Activated CD4-positive, alpha-beta T cell treated with anti-CD3 and anti-CD28 coated beads for 36 hours (primary cell): ENCODE measurements at regions of chr16 and their contacts with region 1.

Region 1: GRCh38 chr16:23795378-23795777 is 40.4 kb upstream of the PRKCB start:
- DNase-seq: no peak
- ATAC-seq: no peak
- H3K4me3 Mint-ChIP-seq: no peak overlapping the region
- H3K27ac Mint-ChIP-seq: no peak overlapping the region
- H3K4me1 Mint-ChIP-seq: no peaks in the 10 kb centered on the region
- H3K27me3 Mint-ChIP-seq: peaks cover under 1% of the 10 kb centered on the region

Region 2: DNA sequence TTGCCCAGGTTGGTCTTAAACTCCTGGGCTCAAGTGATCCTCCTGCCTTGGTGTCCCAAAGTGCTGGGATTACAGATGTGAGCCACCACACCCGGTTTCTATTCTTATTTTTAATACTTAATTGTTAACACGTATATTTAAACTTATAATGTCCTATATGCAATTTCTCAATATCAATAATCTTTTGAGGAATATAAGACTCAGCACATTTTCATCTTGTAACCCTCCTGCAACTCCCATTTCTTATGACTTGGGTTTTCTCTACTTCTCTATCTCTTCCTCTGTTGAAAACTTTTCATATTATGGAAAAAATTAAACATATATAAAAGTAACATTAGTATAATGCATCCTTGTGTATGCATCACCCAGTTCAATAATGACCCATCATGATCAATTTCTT is 191.1 kb after region 1 on chr16:
- CTCF ChIA-PET with region 1: no interaction called
- POLR2A ChIA-PET with region 1: no interaction called
- intact Hi-C with region 1: no loop called
- DNase-seq: no peak
- ATAC-seq: no peak
- H3K4me3 Mint-ChIP-seq: no peak overlapping the region
- H3K27ac Mint-ChIP-seq: no peak overlapping the region
- H3K4me1 Mint-ChIP-seq: peaks cover 11% of the 10 kb centered on the region
- H3K27me3 Mint-ChIP-seq: no peaks in the 10 kb centered on the region

Region 3: DNA sequence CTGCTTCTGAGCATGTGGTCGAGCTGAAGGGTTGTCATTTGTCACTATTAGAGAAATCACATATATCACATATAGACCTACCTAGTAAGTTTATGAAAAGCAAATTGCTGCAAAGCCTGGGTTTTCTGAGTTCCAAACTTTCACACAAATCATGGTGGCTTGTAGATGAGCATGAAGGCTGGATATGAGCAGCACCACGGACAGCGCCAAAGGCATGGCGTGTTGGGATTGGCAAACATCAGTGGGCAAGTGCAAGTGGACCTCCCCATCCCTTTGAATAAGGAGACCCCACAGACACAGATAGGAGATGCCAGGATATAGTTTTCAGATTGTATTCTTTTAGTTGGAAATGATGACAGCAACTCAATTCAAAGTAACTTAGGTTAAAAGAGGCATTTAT is 383.1 kb after region 1 on chr16:
- CTCF ChIA-PET with region 1: no interaction called
- POLR2A ChIA-PET with region 1: no interaction called
- intact Hi-C with region 1: no loop called
- DNase-seq: peak; percentile 43
- ATAC-seq: no peak
- H3K4me3 Mint-ChIP-seq: no peak overlapping the region
- H3K27ac Mint-ChIP-seq: no peak overlapping the region
- H3K4me1 Mint-ChIP-seq: no peaks in the 10 kb centered on the region
- H3K27me3 Mint-ChIP-seq: no peaks in the 10 kb centered on the region

Region 4: GRCh38 chr16:24235806-24236205 is 440.4 kb after region 1 on chr16:
- CTCF ChIA-PET with region 1: no interaction called
- POLR2A ChIA-PET with region 1: no interaction called
- intact Hi-C with region 1: loop called in 1 of 2 experiments (anchors 10 kb)
- DNase-seq: no peak
- ATAC-seq: no peak
- H3K4me3 Mint-ChIP-seq: no peak overlapping the region
- H3K27ac Mint-ChIP-seq: no peak overlapping the region
- H3K4me1 Mint-ChIP-seq: no peaks in the 10 kb centered on the region
- H3K27me3 Mint-ChIP-seq: peaks cover 7% of the 10 kb centered on the region